Lower leg skin (tissue), 4 donors: ENCODE measurements at regions of chr18 and their contacts with region 1.

Region 1: GRCh38 chr18:11654736-11655605 is 34.1 kb upstream of the GNAL start:
- DNase-seq: peak; percentile 49 to 92
- H3K4me3 ChIP-seq: no peak overlapping the region
- CTCF ChIP-seq: no peak
- POLR2A ChIP-seq: no peak

Region 2: DNA sequence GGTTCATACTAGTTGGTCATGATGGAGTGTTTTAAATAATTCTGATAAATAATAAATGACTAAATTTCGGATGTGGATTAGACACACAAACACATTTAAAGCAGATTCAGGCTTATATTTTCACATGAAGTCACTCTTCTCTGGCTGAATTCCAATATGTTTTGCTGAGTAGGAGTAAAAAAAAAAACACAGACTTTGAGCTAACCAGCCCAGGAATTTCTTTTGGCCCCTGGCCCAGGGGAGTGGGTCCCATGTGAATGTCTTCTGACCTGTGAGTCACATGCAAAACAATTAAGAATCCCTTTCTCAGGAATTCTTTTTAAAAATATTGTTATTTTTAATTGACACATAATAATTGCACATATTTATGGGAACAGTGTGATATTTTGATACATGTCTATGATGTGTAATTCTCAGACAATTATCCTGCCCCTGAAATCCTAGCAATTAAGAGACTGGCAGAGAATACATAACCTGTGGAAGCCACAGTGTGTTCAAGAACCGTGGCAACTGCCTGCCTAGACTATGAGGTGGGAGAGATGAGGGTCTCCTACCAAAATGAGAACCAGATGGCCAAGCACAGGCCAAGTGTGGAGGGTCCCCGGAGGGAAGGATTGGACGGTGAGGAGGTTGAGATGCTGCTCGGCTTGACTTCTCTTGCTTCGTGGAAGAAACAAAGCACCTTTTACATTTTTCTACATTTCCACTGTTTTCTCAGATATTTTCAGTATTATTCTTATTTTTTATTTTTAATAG is 742.0 kb before region 1 on chr18:
- intact Hi-C with region 1: no loop called
- DNase-seq: no peak
- H3K4me3 ChIP-seq: no peak overlapping the region
- CTCF ChIP-seq: no peak
- POLR2A ChIP-seq: no peak

Region 3: DNA sequence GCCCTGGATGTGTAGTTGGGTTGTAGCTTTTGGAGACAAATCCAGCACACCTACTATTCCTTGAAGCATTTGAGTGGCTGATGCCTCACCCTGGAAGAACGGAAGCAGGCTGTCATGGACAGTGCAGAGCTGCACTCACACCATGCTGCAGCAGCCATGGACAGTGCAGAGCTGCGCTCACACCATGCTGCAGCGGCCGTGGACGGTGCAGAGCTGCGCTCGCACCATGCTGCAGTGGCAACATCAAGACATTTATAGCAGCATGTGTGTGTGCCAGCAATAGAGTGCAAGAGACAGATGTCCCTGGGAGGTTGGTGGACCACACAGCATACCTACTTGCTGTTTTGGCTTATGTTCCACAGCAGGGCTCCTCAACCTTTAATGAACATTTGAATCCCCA is 64.7 kb after region 1 on chr18:
- intact Hi-C with region 1: loop called (anchors 10 kb)
- DNase-seq: peak in 1 of 2 donors; percentile 34
- H3K4me3 ChIP-seq: no peak overlapping the region
- CTCF ChIP-seq: no peak
- POLR2A ChIP-seq: no peak

Region 4: DNA sequence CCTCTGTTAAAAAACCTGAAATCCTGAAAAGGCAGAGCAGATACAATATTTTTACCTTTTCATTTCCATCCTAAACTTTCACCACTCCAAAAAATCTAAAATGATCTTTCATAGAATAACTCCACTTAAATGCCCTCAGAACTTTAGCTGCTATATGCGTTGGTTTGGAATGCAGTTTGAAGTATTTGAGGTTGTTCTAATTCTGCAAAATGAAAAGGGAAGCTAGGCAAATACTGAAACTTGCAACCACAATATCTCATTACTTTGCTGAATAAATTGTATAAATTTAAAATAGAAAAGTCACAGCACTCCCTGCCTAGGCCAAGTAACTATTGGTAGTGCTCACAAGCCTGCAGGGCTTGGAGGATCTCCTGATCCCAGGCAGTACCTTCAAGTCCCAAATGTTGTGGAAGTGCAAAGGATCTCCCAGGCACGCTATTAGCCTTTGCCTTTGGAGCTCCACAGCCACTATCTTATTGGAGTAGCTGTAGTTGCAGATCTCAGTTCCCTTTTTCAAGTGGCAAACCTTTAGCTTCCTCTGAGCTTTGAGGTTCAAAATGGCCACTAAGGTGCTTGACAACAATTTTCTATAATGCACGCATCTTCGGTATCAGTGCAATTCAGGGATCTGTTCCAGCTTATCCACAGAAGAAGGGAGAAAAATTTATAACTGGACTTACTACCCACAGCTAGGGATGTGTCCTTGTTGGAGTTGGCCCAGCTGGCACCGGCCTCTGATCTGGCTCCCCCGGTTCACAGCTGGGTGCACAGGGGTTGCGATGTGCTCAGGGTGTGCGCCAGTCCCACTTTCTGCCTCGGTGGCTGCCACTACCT is 395.2 kb after region 1 on chr18:
- intact Hi-C with region 1: loop called (anchors 10 kb)
- DNase-seq: peak in 1 of 2 donors; percentile 11
- H3K4me3 ChIP-seq: no peak overlapping the region
- CTCF ChIP-seq: no peak
- POLR2A ChIP-seq: no peak

Region 5: GRCh38 chr18:12441475-12442034 is 786.6 kb after region 1 on chr18:
- intact Hi-C with region 1: no loop called
- DNase-seq: no peak
- H3K4me3 ChIP-seq: no peak overlapping the region
- CTCF ChIP-seq: no peak
- POLR2A ChIP-seq: no peak